ENCODE measurements at regions of chr6 and their contacts with region 1.

Region 1: DNA sequence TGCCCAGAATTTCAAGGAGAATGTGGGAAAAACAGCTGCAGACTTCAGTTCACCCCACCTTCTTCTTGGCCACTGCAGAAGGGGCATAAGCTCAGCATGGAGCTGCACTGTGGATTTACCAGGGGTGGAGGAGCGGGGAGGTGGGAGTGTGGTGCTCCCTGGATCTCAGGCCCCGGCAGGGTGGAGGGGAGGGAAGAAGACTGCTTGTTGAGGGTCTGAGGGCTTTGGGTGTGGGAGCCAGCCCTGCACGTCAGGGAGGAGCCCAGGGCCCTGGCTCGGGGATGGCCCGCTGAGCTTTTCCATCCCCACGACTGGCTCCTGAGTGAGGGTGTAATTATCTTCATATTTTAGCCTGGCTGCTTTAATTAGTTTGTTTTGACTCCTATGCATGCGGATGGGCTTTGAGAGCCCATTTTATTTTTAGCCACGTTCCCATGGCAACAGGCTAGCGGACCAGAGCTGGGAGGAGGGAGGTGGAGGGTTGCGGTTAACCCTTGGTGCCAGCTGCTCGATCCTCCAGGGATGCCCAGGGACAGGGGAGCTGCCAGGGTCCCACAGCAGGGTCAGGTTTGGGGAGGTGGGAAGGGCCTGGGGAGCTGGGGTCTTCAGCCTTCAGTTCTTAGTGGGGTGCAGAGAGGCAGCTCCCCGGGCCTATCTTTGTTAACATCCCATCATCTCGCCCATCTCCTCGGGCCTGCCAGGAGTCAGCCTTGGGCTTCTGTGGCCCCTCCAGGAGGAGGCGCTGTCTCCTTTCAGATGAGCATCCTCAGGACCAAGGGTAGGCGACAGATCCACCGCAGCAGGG is 68.2 kb downstream of the RAB44 start:
- DNase-seq: peak; percentile 87
- H3K4me3 ChIP-seq: no peak overlapping the region
- H3K27ac ChIP-seq: no peak overlapping the region
- H3K4me1 ChIP-seq: no peaks in the 10 kb centered on the region
- H3K27me3 ChIP-seq: no peaks in the 10 kb centered on the region
- CTCF ChIP-seq: peak; percentile 82

Region 2: GRCh38 chr6:36851149-36851614 is 85.4 kb after region 1 on chr6:
- intact Hi-C with region 1: loop called (anchors 2 kb)
- DNase-seq: peak; percentile 67
- H3K4me3 ChIP-seq: no peak overlapping the region
- H3K27ac ChIP-seq: no peak overlapping the region
- H3K4me1 ChIP-seq: no peaks in the 10 kb centered on the region
- H3K27me3 ChIP-seq: no peaks in the 10 kb centered on the region
- CTCF ChIP-seq: peak; percentile 79

Region 3: DNA sequence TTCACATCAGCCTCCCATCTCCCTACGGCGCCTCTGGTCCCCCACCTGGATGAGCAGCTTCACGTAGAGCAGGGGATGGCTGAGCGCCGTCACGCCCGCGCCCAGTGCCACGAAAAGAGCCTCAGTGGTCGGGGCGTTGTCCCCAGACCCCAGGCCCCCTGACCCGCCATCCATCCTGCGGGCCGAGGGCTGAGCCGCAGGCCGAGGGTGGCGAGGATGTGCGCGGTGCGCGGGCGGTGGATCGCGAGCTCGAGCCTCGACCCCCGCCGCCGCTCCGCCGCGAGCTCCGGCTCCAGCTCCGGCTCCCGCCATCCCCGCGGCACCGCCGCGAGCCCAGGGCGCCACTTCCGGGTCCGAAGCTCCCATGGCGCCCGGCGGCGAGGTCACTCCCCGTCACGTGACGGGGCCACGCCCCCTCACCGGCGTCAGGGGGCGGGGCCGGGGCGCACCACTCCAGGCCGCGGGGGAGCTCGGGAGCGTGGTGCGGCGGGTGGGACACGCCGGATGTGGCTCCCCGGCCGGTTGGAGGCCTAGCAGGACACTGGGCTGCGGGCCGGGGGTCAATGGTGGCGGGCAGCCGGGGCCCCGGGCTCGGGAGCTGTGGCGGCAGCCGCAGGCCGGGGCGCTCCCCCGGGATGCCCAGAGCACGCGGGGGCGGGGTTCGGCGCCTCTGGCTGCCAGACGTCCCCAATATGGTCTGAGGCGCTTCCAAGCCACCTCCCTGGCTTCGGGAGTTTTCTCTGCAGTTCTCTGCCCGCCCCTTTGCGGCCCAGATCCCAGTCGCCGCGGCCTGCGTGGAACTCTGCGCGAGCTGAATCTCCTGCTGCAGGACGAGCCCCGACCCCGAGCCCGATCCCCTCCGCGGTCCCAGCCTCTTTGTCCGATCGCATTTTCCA is 220.3 kb after region 1 on chr6 and contains the start of gene MTCH1:
- intact Hi-C with region 1: loop called (anchors 10 kb)
- DNase-seq: peak; percentile 89
- H3K4me3 ChIP-seq: peak within 1 kb of the TSS; percentile 95
- H3K27ac ChIP-seq: peak within 1 kb of the TSS; percentile 95
- H3K4me1 ChIP-seq: peaks cover 2% of the 10 kb centered on the region
- H3K27me3 ChIP-seq: no peaks in the 10 kb centered on the region
- CTCF ChIP-seq: no peak
- total RNA-seq, gene MTCH1: 160 to 197 TPM

Region 4: DNA sequence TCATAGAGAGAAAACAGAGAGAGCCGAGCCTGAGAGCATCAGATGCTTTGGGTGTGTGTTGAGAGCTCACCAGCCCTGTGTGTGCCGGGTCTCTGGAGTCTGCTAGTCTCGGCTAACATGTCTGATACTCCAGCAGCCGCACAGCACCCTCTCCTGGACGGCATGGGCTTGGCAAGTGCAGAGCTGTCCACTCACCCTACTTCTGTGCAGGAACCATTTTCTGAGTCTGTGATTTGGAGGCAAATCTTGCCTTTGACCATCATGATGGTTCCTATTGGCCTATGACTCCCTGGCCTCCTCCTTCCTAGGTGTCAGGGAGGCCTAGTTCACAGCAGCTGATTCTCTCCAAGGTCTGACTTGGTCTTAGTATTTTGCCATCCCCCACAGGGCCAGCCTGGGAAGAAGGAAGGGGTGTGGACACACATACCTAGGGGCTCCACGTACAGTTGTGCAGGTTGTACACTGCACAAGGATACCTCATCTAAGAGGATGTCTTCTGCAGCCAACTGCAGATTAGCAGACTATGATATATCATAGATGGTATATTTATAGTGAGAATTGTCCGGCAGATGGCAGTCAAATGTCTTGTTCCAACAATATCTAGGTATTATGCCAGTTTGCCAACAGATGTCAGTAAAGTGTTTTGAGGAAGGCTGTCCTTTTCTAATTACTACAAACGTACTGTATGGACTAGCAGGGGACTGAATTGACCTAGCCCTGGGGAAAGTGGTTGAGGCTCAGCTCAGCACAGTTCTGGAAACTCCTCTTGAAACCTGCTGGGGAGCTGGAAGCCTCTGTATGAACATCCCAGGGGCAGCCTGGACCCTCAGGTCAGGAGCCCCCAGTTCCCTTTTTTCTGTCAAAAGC is 252.6 kb after region 1 on chr6:
- intact Hi-C with region 1: loop called (anchors 2 kb)
- DNase-seq: peak; percentile 92
- H3K4me3 ChIP-seq: no peak overlapping the region
- H3K27ac ChIP-seq: no peak overlapping the region
- H3K4me1 ChIP-seq: no peaks in the 10 kb centered on the region
- H3K27me3 ChIP-seq: no peaks in the 10 kb centered on the region
- CTCF ChIP-seq: peak; percentile 79